CD8-positive, alpha-beta T cell (primary cell): ENCODE measurements at regions of chr2 and their contacts with region 1.

Region 1: DNA sequence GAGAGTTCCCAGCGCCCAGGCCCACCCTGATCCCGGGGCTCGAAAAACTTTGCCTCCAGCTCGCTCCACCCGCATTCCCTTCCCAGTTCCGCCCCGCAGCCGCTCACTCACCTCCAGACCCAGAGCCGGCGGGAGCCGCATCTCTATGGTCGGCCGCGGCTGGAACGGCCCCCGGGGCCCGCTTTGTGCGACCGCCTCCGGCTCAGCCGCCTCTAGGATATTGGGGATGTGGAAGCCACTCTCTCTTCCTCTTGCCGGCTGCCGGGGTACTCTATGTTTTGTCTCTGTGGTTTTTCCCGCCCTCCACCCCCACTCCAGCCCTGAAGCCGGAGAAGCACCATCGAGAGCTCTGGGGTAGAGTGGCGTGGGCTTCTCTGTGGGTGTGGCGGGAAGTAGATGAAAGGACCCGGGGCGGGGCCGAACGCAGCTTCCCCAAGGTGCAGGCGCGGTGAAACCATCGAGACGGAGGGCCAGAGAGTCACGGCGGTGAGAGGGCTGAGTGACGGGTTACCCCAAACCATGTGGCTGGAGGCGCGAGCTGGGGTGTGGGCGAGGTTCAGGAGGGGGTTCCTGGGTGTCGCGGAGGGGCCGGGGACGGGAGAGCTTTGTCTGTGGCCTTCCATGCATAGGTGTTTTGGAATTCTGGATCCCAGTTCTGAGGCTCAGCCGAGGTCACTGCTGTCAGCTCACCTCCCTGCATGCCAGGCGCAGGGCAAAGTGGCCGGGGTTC is at the starts of genes BCS1L and ZNF142:
- DNase-seq: peak; percentile 78 to 97 (median 92)
- ATAC-seq: peak; percentile 98
- H3K4me3 ChIP-seq: peak within 1 kb of the TSS; percentile 95 to 98
- H3K4me3 Mint-ChIP-seq: peak within 1 kb of the TSS; percentile 97
- H3K27ac ChIP-seq: peak within 1 kb of the TSS; percentile 66 to 80
- H3K27ac Mint-ChIP-seq: peak within 1 kb of the TSS; percentile 95
- H3K4me1 ChIP-seq: peaks cover 17% of the 10 kb centered on the region
- H3K4me1 Mint-ChIP-seq: peaks cover 34% of the 10 kb centered on the region
- H3K27me3 ChIP-seq: no peaks in the 10 kb centered on the region
- H3K27me3 Mint-ChIP-seq: no peaks in the 10 kb centered on the region
- CTCF ChIP-seq: no peak
- total RNA-seq, gene BCS1L: 13.1 to 17.4 TPM
- total RNA-seq, gene ZNF142: 41.6 to 42.6 TPM

Region 2: GRCh38 chr2:218292048-218293014 is 367.1 kb before region 1 on chr2 and contains the start of gene TMBIM1:
- CTCF ChIA-PET with region 1: no interaction called
- POLR2A ChIA-PET with region 1: no interaction called
- intact Hi-C with region 1: loop called in 1 of 2 experiments (anchors 5 kb)
- DNase-seq: peak; percentile 64 to 91 (median 79)
- ATAC-seq: peak; percentile 82
- H3K4me3 ChIP-seq: peak within 1 kb of the TSS; percentile 79 to 89
- H3K4me3 Mint-ChIP-seq: peak within 1 kb of the TSS; percentile 83
- H3K27ac ChIP-seq: peak within 1 kb of the TSS; percentile 72 to 87
- H3K27ac Mint-ChIP-seq: peak within 1 kb of the TSS; percentile 98
- H3K4me1 ChIP-seq: peaks cover 50% of the 10 kb centered on the region
- H3K4me1 Mint-ChIP-seq: peaks cover 51% of the 10 kb centered on the region
- H3K27me3 ChIP-seq: no peaks in the 10 kb centered on the region
- H3K27me3 Mint-ChIP-seq: no peaks in the 10 kb centered on the region
- CTCF ChIP-seq: peak; percentile 93
- total RNA-seq, gene TMBIM1: 80.8 to 86.7 TPM

Region 3: DNA sequence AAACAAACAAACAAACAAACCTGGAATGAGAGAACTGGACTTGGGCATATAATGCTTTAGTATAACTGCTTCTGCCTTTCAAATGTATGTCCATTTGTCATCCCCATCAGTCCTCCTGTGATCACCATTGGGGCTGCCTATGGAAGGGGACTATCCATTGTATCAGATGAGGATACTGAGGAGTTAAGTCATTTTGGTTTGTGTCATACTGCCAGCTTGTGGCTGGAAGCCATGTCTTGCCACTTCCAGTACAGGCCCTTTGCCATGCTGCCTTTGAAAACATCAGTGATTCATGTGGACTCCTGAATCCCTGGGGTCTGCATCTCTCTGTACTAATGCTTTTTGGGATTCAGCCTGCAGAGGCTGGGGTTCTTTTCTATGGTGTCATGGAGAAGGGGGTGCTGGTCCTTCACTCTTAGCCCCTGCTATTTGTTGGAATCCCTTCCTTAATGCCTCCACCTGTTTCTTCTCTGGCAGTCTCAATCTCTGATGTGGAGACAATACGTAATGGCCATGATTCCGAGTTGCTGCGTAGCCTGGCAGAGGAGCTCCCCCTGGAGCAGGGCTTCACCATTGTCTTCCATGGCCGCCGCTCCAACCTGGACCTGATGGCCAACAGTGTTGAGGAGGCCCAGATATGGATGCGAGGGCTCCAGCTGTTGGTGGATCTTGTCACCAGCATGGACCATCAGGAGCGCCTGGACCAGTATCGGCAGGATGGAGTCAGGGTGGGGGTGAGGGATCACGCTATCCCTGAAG is 41.1 kb before region 1 on chr2:
- CTCF ChIA-PET with region 1: no interaction called
- POLR2A ChIA-PET with region 1: no interaction called
- intact Hi-C with region 1: no loop called
- DNase-seq: no peak
- ATAC-seq: no peak
- H3K4me3 ChIP-seq: no peak overlapping the region
- H3K4me3 Mint-ChIP-seq: no peak overlapping the region
- H3K27ac ChIP-seq: no peak overlapping the region
- H3K27ac Mint-ChIP-seq: no peak overlapping the region
- H3K4me1 ChIP-seq: no peaks in the 10 kb centered on the region
- H3K4me1 Mint-ChIP-seq: no peaks in the 10 kb centered on the region
- H3K27me3 ChIP-seq: no peaks in the 10 kb centered on the region
- H3K27me3 Mint-ChIP-seq: no peaks in the 10 kb centered on the region
- CTCF ChIP-seq: no peak

Region 4: GRCh38 chr2:218671654-218672566 is 12.5 kb after region 1 on chr2 and contains the starts of genes RNF25 and STK36:
- CTCF ChIA-PET with region 1: interaction called, 20 read pairs
- POLR2A ChIA-PET with region 1: interaction called, 45 read pairs
- intact Hi-C with region 1: loop called (anchors 1 kb)
- DNase-seq: peak; percentile 56 to 90 (median 82)
- ATAC-seq: peak; percentile 92
- H3K4me3 ChIP-seq: peak within 1 kb of the TSS; percentile 80 to 86
- H3K4me3 Mint-ChIP-seq: peak within 1 kb of the TSS; percentile 97
- H3K27ac ChIP-seq: peak within 1 kb of the TSS; percentile 74 to 83
- H3K27ac Mint-ChIP-seq: peak within 1 kb of the TSS; percentile 96
- H3K4me1 ChIP-seq: peaks cover 16% of the 10 kb centered on the region
- H3K4me1 Mint-ChIP-seq: peaks cover 25% of the 10 kb centered on the region
- H3K27me3 ChIP-seq: no peaks in the 10 kb centered on the region
- H3K27me3 Mint-ChIP-seq: no peaks in the 10 kb centered on the region
- CTCF ChIP-seq: no peak
- total RNA-seq, gene RNF25: 26.0 to 29.3 TPM
- total RNA-seq, gene STK36: 7.5 to 8.1 TPM

Region 5: DNA sequence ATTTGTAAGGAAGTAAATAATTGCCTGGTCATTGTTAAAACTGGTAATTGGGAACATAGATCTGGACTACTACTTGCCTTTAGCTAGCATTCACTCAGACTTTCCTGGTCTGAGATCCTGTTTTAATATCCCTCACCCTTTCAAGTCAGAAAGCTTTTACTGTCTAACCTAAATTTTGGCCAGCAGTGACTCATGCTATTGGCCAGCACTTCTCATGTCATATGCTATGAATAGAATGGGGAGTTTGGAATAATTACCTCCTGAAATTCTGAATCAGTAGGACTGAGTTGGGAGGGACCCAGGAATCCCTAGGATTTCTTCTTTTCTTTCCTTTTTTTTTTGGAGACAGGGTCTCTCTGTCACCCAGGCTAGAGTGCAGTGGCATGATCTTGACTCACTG is 31.8 kb after region 1 on chr2:
- CTCF ChIA-PET with region 1: interaction called, 7 read pairs
- POLR2A ChIA-PET with region 1: no interaction called
- intact Hi-C with region 1: loop called in 1 of 2 experiments (anchors 1 kb)
- DNase-seq: no peak
- ATAC-seq: no peak
- H3K4me3 ChIP-seq: no peak overlapping the region
- H3K4me3 Mint-ChIP-seq: no peak overlapping the region
- H3K27ac ChIP-seq: no peak overlapping the region
- H3K27ac Mint-ChIP-seq: no peak overlapping the region
- H3K4me1 ChIP-seq: no peaks in the 10 kb centered on the region
- H3K4me1 Mint-ChIP-seq: peaks cover 2% of the 10 kb centered on the region
- H3K27me3 ChIP-seq: no peaks in the 10 kb centered on the region
- H3K27me3 Mint-ChIP-seq: no peaks in the 10 kb centered on the region
- CTCF ChIP-seq: no peak

Region 6: GRCh38 chr2:218710687-218711549 is 51.5 kb after region 1 on chr2 and contains the start of gene TTLL4:
- CTCF ChIA-PET with region 1: interaction called, 3 read pairs
- POLR2A ChIA-PET with region 1: interaction called, 9 read pairs
- intact Hi-C with region 1: loop called (anchors 1 to 2 kb)
- DNase-seq: peak; percentile 97 to 99 (median 99)
- ATAC-seq: peak; percentile 99
- H3K4me3 ChIP-seq: peak within 1 kb of the TSS; percentile 86 to 92
- H3K4me3 Mint-ChIP-seq: peak within 1 kb of the TSS; percentile 91
- H3K27ac ChIP-seq: peak within 1 kb of the TSS; percentile 73 to 90
- H3K27ac Mint-ChIP-seq: peak within 1 kb of the TSS; percentile 84
- H3K4me1 ChIP-seq: peaks cover 13% of the 10 kb centered on the region
- H3K4me1 Mint-ChIP-seq: peaks cover 19% of the 10 kb centered on the region
- H3K27me3 ChIP-seq: no peaks in the 10 kb centered on the region
- H3K27me3 Mint-ChIP-seq: peaks cover 6% of the 10 kb centered on the region
- CTCF ChIP-seq: peak; percentile 76
- total RNA-seq, gene TTLL4: 6.9 to 8.1 TPM